ENCODE measurements at regions of chr22 and their contacts with region 1.

Region 1: DNA sequence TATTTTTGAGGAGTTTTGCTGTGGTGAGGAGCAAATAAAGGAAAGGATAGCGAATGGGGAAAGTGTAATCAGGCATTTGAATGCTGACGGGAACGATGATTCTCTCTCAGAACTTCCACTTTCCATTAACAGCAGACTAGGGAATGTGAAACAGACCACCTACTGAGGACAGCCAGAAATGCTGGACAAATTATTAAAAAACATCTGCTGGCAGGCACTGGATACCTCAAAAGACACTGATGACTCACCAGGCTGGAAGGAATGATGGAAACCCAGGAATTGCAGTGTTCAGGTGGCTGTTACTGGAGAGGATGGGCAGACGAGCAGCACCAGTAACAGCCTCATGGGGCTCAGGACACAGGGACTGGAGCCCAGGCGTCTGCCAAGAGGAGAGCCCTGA is 33.4 kb downstream of the PLA2G6 start:
- DNase-seq: no peak
- H3K4me3 ChIP-seq: no peak overlapping the region
- H3K27ac ChIP-seq: no peak overlapping the region
- H3K4me1 ChIP-seq: no peaks in the 10 kb centered on the region
- H3K27me3 ChIP-seq: no peaks in the 10 kb centered on the region
- CTCF ChIP-seq: no peak
- POLR2A ChIP-seq: no peak

Region 2: GRCh38 chr22:38167988-38168431 is 19.8 kb after region 1 on chr22:
- intact Hi-C with region 1: loop called (anchors 2 kb)
- DNase-seq: peak; percentile 72 to 85
- H3K4me3 ChIP-seq: no peak overlapping the region
- H3K27ac ChIP-seq: peak overlapping the region; percentile 84 to 88
- H3K4me1 ChIP-seq: peaks cover 8 to 14% of the 10 kb centered on the region in 2 donors
- H3K27me3 ChIP-seq: no peaks in the 10 kb centered on the region
- CTCF ChIP-seq: no peak
- POLR2A ChIP-seq: no peak

Measured in breast epithelium (tissue), 4 donors.